Posterior cingulate gyrus (tissue), 11 donors: ENCODE measurements at regions of chr2 and their contacts with region 1.

Region 1: GRCh38 chr2:134568413-134568812 is 150.4 kb downstream of the TMEM163 start:
- DNase-seq: no peak

Region 2: DNA sequence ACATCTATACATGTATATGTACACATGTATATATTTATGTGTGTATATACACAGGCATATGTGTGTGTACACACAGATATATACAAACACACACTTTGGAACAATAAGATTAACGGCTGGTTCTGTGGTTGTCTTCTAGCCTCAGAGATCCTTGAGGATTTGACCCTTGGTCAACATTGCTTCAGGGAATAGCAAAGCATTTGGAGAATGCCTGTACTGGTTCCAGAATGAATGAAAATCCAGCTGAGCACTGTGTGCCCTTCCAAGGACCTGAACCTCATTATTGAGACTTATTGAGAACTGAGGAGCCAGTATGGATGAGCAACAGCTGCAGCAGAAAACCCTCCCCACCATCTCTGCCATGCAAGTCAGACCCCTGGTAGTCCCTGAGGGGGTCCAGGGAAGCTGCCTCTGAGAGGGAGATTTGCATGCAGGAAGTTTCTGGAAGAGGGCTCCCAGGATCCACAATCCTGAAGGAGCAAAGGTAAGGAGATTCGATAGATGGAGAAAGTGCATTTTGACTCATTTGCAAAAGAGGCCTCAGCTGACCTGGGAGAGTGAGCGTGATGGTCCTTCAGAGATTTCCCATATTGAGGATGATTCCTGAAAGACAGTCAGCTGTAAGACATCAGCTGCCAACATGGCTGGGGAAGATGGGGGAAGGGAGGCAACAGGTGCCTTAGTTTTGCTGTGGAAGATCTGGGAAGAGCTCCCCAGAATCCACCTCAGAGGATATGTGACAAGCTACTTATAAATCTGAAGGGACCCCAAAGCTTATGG is 833.5 kb before region 1 on chr2:
- intact Hi-C with region 1: loop called (anchors 5 kb)
- DNase-seq: no peak